Vagina (tissue), 2 donors: ENCODE measurements at regions of chr9 and their contacts with region 1.

Region 1: GRCh38 chr9:121376214-121376830 is 6.3 kb upstream of the STOM start:
- DNase-seq: no peak
- H3K4me3 ChIP-seq: no peak overlapping the region
- H3K27ac ChIP-seq: no peak overlapping the region
- H3K4me1 ChIP-seq: peaks cover 34% of the 10 kb centered on the region
- H3K27me3 ChIP-seq: no peaks in the 10 kb centered on the region
- CTCF ChIP-seq: peak in 1 of 3 experiments; percentile 42
- POLR2A ChIP-seq: no peak

Region 2: GRCh38 chr9:121206516-121207370 is 169.6 kb before region 1 on chr9:
- intact Hi-C with region 1: loop called (anchors 5 kb)
- DNase-seq: no peak
- H3K4me3 ChIP-seq: no peak overlapping the region
- H3K27ac ChIP-seq: no peak overlapping the region
- H3K4me1 ChIP-seq: peaks cover 5% of the 10 kb centered on the region
- H3K27me3 ChIP-seq: no peaks in the 10 kb centered on the region
- CTCF ChIP-seq: no peak
- POLR2A ChIP-seq: no peak

Region 3: DNA sequence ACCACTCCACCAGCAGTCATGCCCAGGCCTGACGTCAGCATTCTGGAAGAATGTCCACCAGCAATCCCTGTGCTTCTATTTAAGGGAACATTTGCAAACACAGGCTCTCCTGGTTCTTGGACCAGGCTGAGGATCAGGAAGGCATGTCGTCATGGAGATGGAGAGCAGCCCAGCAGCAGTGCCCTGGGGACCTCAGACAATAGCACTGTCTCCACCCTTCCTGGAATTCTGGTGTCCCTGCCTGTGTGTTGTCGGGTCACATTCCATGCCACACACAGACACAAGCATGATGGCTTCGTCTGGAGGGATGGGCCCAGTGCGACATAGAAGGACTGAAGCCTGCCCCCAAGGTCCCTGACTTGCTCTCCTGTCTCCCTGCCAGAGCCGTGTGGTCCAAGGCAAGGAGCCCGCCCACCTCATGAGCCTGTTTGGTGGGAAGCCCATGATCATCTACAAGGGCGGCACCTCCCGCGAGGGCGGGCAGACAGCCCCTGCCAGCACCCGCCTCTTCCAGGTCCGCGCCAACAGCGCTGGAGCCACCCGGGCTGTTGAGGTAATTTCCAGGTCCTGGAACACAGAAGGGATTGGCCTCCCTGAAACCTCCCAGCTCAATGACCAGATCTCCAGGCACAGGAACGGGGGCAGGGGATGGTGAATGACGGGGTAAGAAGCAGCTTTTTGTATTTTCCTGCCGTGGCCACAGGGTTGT is 50.0 kb before region 1 on chr9:
- intact Hi-C with region 1: loop called (anchors 2 kb)
- DNase-seq: peak in 1 of 2 donors; percentile 99
- H3K4me3 ChIP-seq: no peak overlapping the region
- H3K27ac ChIP-seq: peak overlapping the region; percentile 98
- H3K4me1 ChIP-seq: peaks cover 77% of the 10 kb centered on the region
- H3K27me3 ChIP-seq: no peaks in the 10 kb centered on the region
- CTCF ChIP-seq: no peak
- POLR2A ChIP-seq: peak in 1 of 2 donors; percentile 4

Region 4: DNA sequence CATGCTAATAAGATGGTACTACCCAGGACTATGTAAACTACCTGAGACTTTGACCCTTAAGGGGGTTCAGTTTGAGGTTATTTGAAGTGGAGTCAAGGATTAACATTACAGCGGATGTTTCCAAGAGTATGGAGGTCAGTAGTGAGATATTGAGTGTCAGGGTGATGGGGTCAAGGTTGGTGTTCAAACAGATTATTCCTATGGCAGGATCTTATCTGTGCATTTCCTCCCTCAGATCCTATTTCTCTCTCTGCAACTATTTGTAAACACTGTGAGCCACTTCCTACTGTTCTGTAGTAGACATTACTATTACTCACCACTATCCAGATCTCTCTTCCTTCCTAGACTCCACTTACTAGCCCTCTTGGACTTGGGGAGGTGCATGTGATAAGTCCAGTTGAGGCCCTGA is 47.7 kb after region 1 on chr9:
- intact Hi-C with region 1: no loop called
- DNase-seq: no peak
- H3K4me3 ChIP-seq: no peak overlapping the region
- H3K27ac ChIP-seq: no peak overlapping the region
- H3K4me1 ChIP-seq: no peaks in the 10 kb centered on the region
- H3K27me3 ChIP-seq: no peaks in the 10 kb centered on the region
- CTCF ChIP-seq: no peak
- POLR2A ChIP-seq: no peak